Left ventricle myocardium superior (tissue), 1 donor: ENCODE measurements at regions of chr1 and their contacts with region 1.

Region 1: DNA sequence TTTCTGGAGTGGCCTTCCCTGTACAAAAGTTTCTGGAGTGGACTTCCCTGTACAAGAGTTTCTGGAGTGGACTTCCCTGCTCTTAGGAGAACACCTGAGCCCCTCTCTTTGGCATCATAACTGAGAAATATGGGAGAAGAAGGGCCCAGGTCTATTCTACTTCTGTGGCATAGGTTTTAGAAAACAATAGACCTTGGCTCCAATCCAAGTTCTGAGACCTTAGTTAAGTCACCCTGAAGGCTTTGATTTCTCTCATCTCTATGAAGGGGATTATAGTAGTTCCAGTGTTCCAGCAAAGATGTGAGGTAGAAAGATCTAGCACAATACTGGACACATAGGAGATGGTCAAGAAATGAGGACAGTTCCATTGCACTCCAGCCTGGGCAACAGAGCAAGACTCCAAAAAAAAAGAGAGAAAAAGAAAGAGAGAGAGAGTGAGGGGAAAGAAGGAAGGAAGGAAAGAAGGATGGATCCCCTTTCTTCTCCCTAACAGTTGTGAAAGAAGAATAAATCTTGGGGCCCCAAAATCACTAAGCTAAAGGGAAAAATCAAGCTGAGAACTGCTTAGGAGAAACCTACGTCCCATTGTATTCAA is 13.3 kb upstream of the EIF4G3 start:
- DNase-seq: no peak
- ATAC-seq: no peak

Region 2: DNA sequence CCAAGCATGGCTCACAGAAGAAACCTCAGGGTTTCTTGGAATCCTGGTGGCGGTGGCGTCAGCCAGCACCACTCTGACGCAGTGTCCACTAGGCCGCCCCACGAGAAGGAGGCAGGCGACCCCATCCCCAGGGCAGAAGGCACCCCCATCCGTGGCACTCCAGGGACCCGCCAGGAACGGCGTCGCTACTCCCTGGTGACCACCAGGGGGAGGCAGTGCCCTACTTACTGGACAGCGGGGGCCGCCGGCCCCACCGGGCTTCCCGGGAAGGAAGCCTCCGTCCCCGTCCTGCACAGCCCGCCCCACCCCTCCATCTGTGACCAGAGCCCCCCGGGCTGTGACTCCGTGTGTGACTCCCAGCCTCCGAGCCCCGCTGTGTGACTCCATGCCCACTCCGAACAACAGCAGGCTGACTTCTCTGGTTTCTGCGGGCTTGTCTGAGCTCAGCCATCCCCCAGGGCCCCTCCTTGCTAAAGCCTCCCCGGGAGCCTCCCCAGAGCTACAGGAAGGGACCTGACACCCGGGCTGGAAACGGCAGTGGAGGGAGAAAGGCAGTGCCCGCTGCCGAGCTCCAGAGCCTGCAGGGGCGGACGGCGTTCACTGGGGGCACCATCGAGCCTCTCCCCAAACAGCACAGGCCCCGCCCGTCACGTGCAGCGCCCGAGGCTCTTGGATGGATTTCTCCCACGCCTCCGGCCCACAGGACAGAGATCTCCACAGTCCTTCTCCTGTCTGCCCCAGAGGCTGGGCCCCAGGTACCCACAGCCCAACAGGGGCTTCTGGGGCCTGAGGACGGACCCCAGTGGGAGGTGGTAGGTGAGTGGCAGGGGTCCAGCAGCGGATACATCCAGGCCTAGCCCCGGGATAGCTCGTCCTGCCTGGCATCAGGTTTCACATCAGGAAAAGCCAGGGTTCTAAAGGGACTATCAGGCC is 493.3 kb before region 1 on chr1:
- intact Hi-C with region 1: loop called (anchors 10 kb)
- DNase-seq: peak; percentile 90
- ATAC-seq: peak; percentile 95

Region 3: DNA sequence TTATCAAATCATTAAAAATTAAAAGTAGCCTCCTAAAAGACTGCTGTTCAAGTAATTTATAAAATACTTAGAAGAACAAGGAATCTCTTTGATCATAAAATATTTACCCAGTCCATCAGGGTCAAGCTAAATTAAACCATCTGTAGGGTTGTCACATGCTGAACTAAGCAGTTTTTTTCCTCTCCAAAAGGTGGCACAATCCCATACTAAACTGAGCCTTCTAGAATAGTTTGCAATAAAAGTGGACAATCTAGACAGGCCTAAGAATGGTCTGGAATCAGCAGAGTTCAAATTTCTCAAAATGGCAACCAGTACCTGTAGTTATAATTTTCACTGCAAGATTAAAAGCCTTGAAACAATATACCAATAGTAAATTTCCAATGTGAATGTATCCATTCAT is 208.1 kb before region 1 on chr1:
- intact Hi-C with region 1: loop called (anchors 10 kb)
- DNase-seq: no peak
- ATAC-seq: peak; percentile 72